PC-9 (cell line): ENCODE measurements at regions of chr1 and their contacts with region 1.

Region 1: GRCh38 chr1:235213752-235214151 is 52.7 kb upstream of the RBM34 start:
- DNase-seq: no peak
- H3K4me3 ChIP-seq: no peak overlapping the region
- H3K27ac ChIP-seq: no peak overlapping the region
- H3K4me1 ChIP-seq: no peaks in the 10 kb centered on the region
- H3K27me3 ChIP-seq: no peaks in the 10 kb centered on the region
- CTCF ChIP-seq: no peak

Region 2: GRCh38 chr1:235176486-235176885 is 37.3 kb before region 1 on chr1:
- CTCF ChIA-PET with region 1: no interaction called
- POLR2A ChIA-PET with region 1: interaction called, 3 read pairs
- intact Hi-C with region 1: loop called (anchors 5 kb)
- DNase-seq: no peak
- H3K4me3 ChIP-seq: no peak overlapping the region
- H3K27ac ChIP-seq: no peak overlapping the region
- H3K4me1 ChIP-seq: no peaks in the 10 kb centered on the region
- H3K27me3 ChIP-seq: no peaks in the 10 kb centered on the region
- CTCF ChIP-seq: no peak